PC-3 (cell line): ENCODE measurements at regions of chr10 and their contacts with region 1.

Region 1: DNA sequence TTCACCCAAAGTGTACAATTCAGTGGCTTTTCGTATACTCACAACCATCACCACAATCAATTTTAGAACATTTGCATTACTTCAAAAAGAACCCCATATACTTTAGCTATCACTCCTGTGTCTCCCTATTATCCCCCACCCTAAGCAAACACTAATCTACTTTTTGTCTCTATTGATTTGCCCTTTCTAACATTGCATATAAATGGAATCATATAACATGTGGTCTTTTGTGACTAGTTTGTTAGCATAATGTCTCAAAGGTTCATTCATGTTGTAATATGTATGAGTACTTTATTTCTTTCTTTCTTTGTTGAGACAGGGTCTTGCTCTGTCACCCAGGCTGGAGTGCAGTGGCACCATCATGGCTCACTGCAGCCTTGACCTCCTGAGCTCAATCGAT is 21.0 kb upstream of the DNAJC12 start:
- DNase-seq: no peak
- ATAC-seq: no peak
- H3K4me3 ChIP-seq: no peak overlapping the region
- H3K27ac ChIP-seq: no peak overlapping the region
- H3K4me1 ChIP-seq: no peaks in the 10 kb centered on the region
- H3K27me3 ChIP-seq: no peaks in the 10 kb centered on the region
- CTCF ChIP-seq: no peak

Region 2: GRCh38 chr10:67284589-67284988 is 574.4 kb before region 1 on chr10:
- CTCF ChIA-PET with region 1: no interaction called
- POLR2A ChIA-PET with region 1: no interaction called
- intact Hi-C with region 1: no loop called
- DNase-seq: no peak
- ATAC-seq: 0 out of 2 replicates have a peak, but pooled peaks have one; percentile 24
- H3K4me3 ChIP-seq: no peak overlapping the region
- H3K27ac ChIP-seq: no peak overlapping the region
- H3K4me1 ChIP-seq: no peaks in the 10 kb centered on the region
- H3K27me3 ChIP-seq: peaks cover 66% of the 10 kb centered on the region
- CTCF ChIP-seq: peak; percentile 68

Region 3: GRCh38 chr10:67903581-67903980 is 44.6 kb after region 1 on chr10:
- CTCF ChIA-PET with region 1: interaction called, 3 read pairs
- POLR2A ChIA-PET with region 1: no interaction called
- intact Hi-C with region 1: loop called (anchors 5 kb)
- DNase-seq: no peak
- ATAC-seq: no peak
- H3K4me3 ChIP-seq: no peak overlapping the region
- H3K27ac ChIP-seq: no peak overlapping the region
- H3K4me1 ChIP-seq: no peaks in the 10 kb centered on the region
- H3K27me3 ChIP-seq: no peaks in the 10 kb centered on the region
- CTCF ChIP-seq: no peak

Region 4: GRCh38 chr10:67912339-67912946 is 53.5 kb after region 1 on chr10:
- CTCF ChIA-PET with region 1: no interaction called
- POLR2A ChIA-PET with region 1: no interaction called
- intact Hi-C with region 1: loop called (anchors 5 kb)
- DNase-seq: no peak
- ATAC-seq: no peak
- H3K4me3 ChIP-seq: no peak overlapping the region
- H3K27ac ChIP-seq: no peak overlapping the region
- H3K4me1 ChIP-seq: 0 out of 2 replicates have a peak, but pooled peaks cover 4% of the 10 kb centered on the region
- H3K27me3 ChIP-seq: no peaks in the 10 kb centered on the region
- CTCF ChIP-seq: no peak

Region 5: GRCh38 chr10:68027429-68027828 is 168.5 kb after region 1 on chr10:
- CTCF ChIA-PET with region 1: no interaction called
- POLR2A ChIA-PET with region 1: no interaction called
- intact Hi-C with region 1: loop called (anchors 5 kb)
- DNase-seq: no peak
- ATAC-seq: no peak; the same call in 1 of the 2 replicates
- H3K4me3 ChIP-seq: no peak overlapping the region
- H3K27ac ChIP-seq: no peak overlapping the region
- H3K4me1 ChIP-seq: no peaks in the 10 kb centered on the region
- H3K27me3 ChIP-seq: no peaks in the 10 kb centered on the region
- CTCF ChIP-seq: no peak